Motor neuron (in vitro differentiated cells): ENCODE measurements at regions of chr9 and their contacts with region 1.

Region 1: DNA sequence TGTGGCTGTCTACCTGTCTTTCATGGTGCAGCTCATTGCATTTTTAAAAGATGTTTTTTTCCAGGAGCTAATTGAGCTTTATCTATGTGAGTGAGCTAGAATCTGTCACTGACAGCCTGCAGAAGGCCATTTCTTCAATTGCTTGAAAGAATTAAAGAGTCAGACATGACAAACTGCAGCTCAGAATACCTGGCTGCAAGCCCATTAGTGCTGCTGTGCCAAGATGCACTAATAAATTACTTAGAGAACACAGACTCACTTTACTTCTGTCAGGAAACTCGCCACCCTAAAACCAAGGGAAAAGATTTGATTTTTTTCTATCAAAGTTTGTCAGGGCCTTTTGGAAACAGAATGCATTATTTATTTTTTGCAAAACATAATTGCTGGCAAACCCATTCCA is 368.3 kb downstream of the CAAP1 start:
- ATAC-seq: peak in 7 of 8 experiments; percentile 8 to 88 (median 46)
- H3K4me3 ChIP-seq: no peak overlapping the region
- H3K27ac ChIP-seq: no peak overlapping the region
- H3K4me1 ChIP-seq: peaks cover 22 to 24% of the 10 kb centered on the region in 2 donors

Region 2: GRCh38 chr9:26462213-26462612 is 62.1 kb before region 1 on chr9:
- in situ Hi-C with region 1: no loop called
- ATAC-seq: peak in 3 of 8 experiments; percentile 29 to 49 (median 37)
- H3K4me3 ChIP-seq: no peak overlapping the region
- H3K27ac ChIP-seq: no peak overlapping the region
- H3K4me1 ChIP-seq: peaks cover 0 to 23% of the 10 kb centered on the region in 2 donors

Region 3: DNA sequence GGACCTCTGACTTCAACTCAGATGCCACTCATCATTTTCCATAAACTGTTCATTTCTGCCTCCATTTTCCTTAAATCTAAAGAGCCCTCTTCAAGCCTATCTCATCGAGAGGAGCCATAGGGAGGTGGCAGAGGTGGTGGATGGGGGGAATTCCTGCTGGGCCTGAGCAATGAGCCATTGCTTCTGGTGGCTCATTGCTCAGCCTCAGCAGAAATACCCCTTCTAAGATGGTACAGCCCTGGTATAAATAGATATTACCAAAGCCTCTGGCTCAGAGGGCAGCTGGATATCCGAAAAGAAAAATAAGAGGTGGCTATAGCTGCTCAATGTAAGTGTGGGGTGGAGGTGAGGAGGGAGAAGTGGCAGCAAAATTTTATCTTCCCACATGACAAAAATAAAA is 54.8 kb after region 1 on chr9:
- in situ Hi-C with region 1: loop called in 1 of 9 experiments (anchors 10 kb)
- ATAC-seq: peak in 1 of 8 experiments; percentile 53
- H3K4me3 ChIP-seq: no peak overlapping the region
- H3K27ac ChIP-seq: no peak overlapping the region
- H3K4me1 ChIP-seq: peaks cover 0 to 2% of the 10 kb centered on the region in 2 donors

Region 4: DNA sequence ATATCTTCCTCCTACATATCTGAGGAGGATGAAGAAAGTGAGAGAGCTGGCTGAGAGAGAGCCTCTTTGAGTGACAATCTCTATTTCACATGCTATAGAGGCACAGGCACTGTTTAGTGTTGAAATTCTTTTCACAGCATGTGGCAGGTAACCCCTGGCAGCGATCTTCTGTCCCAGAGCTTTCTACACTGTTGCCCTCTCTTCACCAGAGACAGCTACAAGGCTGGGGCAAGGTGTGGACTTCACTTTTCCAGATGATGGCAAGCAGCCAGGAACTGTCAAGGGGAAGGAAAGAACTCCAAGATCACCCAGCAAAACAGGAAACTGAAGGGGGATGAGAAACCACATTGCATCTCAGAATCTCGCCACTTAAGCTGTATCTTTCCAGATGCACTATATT is 163.2 kb after region 1 on chr9:
- in situ Hi-C with region 1: no loop called
- ATAC-seq: no peak
- H3K4me3 ChIP-seq: no peak overlapping the region
- H3K27ac ChIP-seq: no peak overlapping the region
- H3K4me1 ChIP-seq: peaks cover 4 to 14% of the 10 kb centered on the region in 2 donors

Region 5: DNA sequence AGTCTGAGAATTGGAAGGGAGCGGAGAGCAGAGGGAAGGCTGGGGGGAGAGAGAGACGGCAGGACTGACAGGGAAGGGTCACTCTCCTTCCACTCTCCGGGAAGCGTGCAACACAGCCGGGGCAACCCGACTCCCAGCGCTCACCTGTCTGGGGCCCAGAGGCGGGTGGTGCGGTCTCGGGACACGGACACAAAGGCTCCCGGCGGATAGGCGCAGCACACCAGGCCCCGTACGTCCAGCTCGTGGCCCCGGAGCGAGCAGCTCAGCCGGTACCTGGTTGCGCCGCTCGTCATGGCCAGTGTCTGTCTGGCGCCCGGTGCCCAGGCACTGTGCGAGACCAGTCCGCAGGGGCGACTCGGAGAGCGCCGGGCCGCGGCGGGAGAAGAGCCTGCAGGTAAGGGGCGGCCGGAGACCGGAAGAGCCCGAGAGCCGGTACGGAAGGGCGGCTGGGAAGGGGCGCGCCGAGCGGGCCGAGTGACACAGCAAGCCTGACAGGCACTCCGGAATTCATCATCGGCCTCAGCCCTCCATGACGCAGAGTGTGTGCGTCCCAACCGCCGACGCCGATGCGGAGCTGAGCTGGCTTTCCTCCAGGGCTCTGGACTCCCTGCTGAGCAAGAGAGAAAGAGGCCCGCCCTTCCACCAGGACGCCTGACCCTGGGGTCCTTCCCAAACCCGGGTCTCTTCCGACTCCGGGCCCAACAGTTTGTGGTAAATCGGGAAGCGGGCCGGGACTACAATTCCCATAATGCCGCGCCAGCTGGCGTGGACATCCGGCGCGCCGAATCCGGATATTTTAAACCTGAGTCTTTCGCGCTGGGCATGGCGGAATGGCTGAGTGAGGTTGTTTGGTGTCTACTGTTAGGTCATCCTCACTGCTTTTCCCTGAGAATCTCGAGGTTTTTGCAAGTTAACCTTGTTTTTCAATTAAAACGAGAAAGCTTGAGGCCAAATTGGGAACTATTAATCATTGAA is 422.8 kb after region 1 on chr9 and contains the start of gene PLAA:
- in situ Hi-C with region 1: no loop called
- ATAC-seq: peak; percentile 97 to 98 (median 98)
- H3K4me3 ChIP-seq: peak within 1 kb of the TSS; percentile 76 to 99 (median 97)
- H3K27ac ChIP-seq: peak within 1 kb of the TSS; percentile 99 to 100
- H3K4me1 ChIP-seq: peaks cover 7 to 20% of the 10 kb centered on the region in 2 donors
- total RNA-seq, gene PLAA: 34.4 to 49.8 (median 38.5) TPM